ENCODE measurements at regions of chr4 and their contacts with region 1.

Region 1: DNA sequence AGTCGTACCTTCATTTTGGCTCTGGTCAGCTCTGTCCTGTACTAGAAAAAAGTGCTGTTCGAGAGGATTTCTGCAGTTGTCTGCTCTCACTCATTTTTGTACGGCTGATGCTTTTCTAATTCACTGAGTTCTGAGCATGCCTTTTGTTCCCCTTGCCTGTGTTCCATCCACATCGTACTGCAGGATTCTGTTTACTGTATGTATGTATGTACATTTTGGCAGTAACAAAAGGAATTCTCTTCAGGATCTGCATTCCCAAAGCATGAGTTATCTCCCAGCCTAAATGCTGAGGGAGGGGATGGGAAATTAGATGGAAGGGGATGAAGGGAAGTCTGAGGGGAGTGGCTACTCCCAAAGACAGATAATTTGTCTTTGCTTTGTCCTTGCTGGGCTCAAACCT is 87.6 kb downstream of the GBA3 start:
- DNase-seq: no peak
- ATAC-seq: no peak
- H3K4me3 ChIP-seq: no peak overlapping the region
- H3K27ac ChIP-seq: no peak overlapping the region
- H3K4me1 ChIP-seq: no peaks in the 10 kb centered on the region
- H3K27me3 ChIP-seq: no peaks in the 10 kb centered on the region
- CTCF ChIP-seq: no peak
- POLR2A ChIP-seq: no peak
- RAD21 ChIP-seq: no peak

Region 2: GRCh38 chr4:23476515-23477090 is 696.3 kb after region 1 on chr4:
- CTCF ChIA-PET with region 1: no interaction called
- POLR2A ChIA-PET with region 1: no interaction called
- RAD21 ChIA-PET with region 1: no interaction called
- intact Hi-C with region 1: no loop called
- DNase-seq: no peak
- ATAC-seq: no peak
- H3K4me3 ChIP-seq: no peak overlapping the region
- H3K27ac ChIP-seq: no peak overlapping the region
- H3K4me1 ChIP-seq: no peaks in the 10 kb centered on the region
- H3K27me3 ChIP-seq: no peaks in the 10 kb centered on the region
- CTCF ChIP-seq: no peak
- POLR2A ChIP-seq: no peak
- RAD21 ChIP-seq: no peak

Region 3: DNA sequence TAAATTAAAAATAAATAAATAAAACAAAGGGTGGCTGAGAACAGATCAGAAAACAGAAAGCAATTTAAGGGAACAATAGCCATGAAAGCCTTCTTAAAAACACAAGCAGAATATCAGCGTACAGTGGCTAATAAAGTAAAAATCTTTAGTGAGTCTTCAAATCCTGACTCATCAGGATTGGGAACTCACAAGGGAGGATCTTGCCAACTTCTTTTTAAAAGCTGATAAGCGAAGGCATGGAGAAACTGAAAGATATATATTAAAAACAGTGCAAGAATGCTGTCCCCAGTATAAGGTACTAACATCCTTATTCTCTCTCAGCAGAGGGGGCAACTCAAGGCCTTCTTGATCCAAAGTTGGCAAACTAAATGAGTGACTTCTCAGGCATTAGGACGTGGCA is 1624.0 kb after region 1 on chr4:
- CTCF ChIA-PET with region 1: no interaction called
- POLR2A ChIA-PET with region 1: no interaction called
- RAD21 ChIA-PET with region 1: no interaction called
- intact Hi-C with region 1: loop called (anchors 5 kb)
- DNase-seq: no peak
- ATAC-seq: no peak
- H3K4me3 ChIP-seq: no peak overlapping the region
- H3K27ac ChIP-seq: no peak overlapping the region
- H3K4me1 ChIP-seq: no peaks in the 10 kb centered on the region
- H3K27me3 ChIP-seq: no peaks in the 10 kb centered on the region; the same call in 1 of the 2 replicates
- CTCF ChIP-seq: no peak
- POLR2A ChIP-seq: no peak
- RAD21 ChIP-seq: no peak